ENCODE measurements at regions of chr17 and their contacts with region 1.

Region 1: GRCh38 chr17:79045842-79046196 is 21.9 kb downstream of the C1QTNF1 start:
- DNase-seq: peak; percentile 76 to 87
- ATAC-seq: peak; percentile 79 to 91 (median 84)
- H3K4me3 ChIP-seq: no peak overlapping the region
- H3K27ac ChIP-seq: no peak overlapping the region
- H3K4me1 ChIP-seq: peaks cover 5% of the 10 kb centered on the region
- H3K27me3 ChIP-seq: peaks cover 0 to 22% (median 5%) of the 10 kb centered on the region in 3 donors
- CTCF ChIP-seq: peak; percentile 96

Region 2: GRCh38 chr17:78986048-78986648 is 59.7 kb before region 1 on chr17:
- intact Hi-C with region 1: loop called in 1 of 2 experiments (anchors 2 kb)
- DNase-seq: peak in 1 of 2 donors; percentile 57
- ATAC-seq: peak; percentile 72 to 83 (median 74)
- H3K4me3 ChIP-seq: peak overlapping the region; percentile 64
- H3K27ac ChIP-seq: peak overlapping the region; percentile 88
- H3K4me1 ChIP-seq: peaks cover 21% of the 10 kb centered on the region
- H3K27me3 ChIP-seq: no peaks in the 10 kb centered on the region
- CTCF ChIP-seq: peak; percentile 36

Region 3: GRCh38 chr17:78996781-78997201 is 49.0 kb before region 1 on chr17:
- intact Hi-C with region 1: no loop called
- DNase-seq: no peak
- ATAC-seq: no peak
- H3K4me3 ChIP-seq: no peak overlapping the region
- H3K27ac ChIP-seq: no peak overlapping the region
- H3K4me1 ChIP-seq: peaks cover 20% of the 10 kb centered on the region
- H3K27me3 ChIP-seq: no peaks in the 10 kb centered on the region
- CTCF ChIP-seq: no peak

Region 4: DNA sequence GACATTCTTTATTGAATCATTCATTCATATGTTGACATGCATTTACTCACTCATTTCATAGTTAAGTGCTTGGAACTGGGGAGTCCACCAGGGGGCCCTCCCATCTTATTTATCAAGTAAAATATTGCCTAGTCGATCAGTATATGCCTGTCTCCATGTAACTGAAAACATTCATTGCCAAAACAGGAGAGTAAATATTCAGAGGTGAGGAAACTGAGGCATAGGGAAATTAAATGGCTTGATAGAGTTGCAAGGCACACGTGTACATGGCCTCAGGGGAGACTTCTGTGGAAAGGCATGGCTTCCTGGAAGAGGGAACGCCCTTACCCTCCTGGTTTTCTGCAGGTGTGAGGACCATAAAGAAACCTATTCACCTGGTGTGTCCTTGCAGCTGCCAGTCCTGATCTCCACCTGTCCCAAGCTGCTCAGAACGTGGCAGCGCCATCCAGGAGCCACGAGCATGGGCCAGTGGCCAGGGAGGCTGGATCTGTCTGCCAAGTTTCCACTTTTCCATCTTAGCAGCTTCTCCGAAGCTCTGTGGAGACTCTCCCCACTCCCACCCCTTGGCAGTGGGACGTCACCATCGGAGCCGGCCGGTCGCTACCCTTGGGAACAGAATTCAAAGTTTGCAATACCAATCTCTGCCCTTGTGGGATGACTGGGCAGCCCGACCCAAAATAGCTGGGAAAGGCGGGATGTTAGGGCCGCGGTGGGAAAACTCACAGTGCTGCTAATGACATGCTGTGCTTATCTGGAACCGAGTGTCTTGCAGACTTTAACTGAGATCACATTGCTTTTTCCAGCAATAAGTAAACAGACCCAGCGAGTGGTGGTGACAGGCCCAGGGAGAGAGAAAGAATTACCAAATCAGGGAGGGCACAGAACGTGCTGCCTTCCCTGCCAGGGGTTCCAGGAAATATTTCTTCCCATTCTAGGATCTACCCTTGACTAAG is 25.9 kb before region 1 on chr17:
- intact Hi-C with region 1: loop called (anchors 2 kb)
- DNase-seq: peak; percentile 72
- ATAC-seq: peak; percentile 47 to 76 (median 56)
- H3K4me3 ChIP-seq: no peak overlapping the region
- H3K27ac ChIP-seq: no peak overlapping the region
- H3K4me1 ChIP-seq: peaks cover 16% of the 10 kb centered on the region
- H3K27me3 ChIP-seq: peaks cover 0 to 10% (median 0%) of the 10 kb centered on the region in 3 donors
- CTCF ChIP-seq: peak; percentile 64

Region 5: DNA sequence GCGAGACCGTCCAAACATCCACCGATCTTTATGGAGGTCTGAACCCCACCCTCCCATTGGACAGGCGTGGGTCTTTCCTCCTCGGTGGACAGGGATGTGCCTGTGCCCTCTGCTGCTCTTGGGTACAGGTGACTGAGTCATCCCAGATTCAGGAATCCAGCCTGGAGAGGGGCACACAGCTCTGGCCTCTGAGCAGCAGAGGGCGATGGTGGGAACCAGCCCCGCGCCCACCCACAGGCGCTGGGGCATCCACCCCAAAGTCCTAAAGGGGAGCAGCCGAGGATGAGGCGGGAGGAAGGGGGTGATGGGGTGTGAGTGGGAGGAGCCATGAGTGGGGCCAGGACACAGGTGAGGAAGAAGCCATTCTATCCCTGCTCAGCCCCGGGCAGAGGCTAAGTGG is 63.8 kb after region 1 on chr17:
- intact Hi-C with region 1: no loop called
- DNase-seq: no peak
- ATAC-seq: no peak
- H3K4me3 ChIP-seq: no peak overlapping the region
- H3K27ac ChIP-seq: no peak overlapping the region
- H3K4me1 ChIP-seq: peaks cover 3% of the 10 kb centered on the region
- H3K27me3 ChIP-seq: peaks cover 0 to 17% (median 4%) of the 10 kb centered on the region in 3 donors
- CTCF ChIP-seq: no peak

Measured in psoas muscle (tissue), 8 donors.